Left ventricle myocardium superior (tissue), 1 donor: ENCODE measurements at regions of chr10 and their contacts with region 1.

Region 1: DNA sequence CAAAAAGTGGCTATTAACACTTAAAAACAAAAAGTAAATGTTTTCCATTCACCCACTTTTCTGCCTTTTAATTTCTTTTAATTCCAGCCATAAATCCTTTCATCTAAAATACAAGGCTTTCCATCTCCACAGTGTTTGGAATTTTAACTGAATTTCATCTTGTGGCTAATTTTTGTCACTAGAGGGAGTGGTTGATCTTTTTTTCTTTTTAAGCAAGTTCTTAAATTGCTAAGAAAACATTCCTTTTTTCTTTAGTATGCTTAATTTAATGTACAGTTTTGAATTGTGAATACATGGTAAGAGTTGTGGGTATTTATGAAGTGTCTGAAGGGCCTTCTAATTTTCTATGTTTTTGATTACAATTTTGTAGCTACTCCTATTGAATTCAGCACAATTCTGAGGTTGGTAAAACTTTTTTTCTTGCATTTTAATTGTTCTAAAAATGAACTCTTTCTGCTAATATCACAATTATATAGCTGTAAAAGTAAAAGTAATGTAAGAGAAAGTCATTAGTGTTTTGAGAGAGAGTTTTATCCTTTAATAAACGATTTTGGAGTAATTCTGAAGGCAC is 54.9 kb upstream of the ANK3 start:
- DNase-seq: no peak
- ATAC-seq: no peak

Region 2: DNA sequence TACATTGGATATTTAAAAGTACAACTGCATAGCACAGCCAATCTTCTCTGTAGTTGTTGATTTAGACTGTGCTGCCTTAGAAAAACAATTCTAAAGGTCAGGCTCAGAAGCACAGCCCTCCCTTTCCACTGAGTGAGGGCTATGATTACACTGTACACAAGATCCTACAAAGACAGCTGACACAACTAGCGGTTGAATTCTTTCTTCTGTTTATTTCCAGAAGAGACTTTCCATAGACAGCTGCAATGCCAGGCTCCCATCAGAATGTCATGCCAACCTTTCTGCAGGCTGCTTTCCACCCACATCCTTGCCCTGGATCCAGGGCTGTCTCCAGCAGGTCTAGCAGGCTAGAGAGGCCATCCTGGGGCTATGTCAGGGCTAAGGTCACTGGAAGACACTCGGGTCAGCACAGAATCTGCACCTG is 1121.5 kb before region 1 on chr10:
- intact Hi-C with region 1: no loop called
- DNase-seq: no peak
- ATAC-seq: peak; percentile 80

Region 3: GRCh38 chr10:60572511-60573194 is 128.1 kb after region 1 on chr10:
- intact Hi-C with region 1: no loop called
- DNase-seq: peak; percentile 53
- ATAC-seq: peak; percentile 83

Region 4: GRCh38 chr10:60646966-60647796 is 202.6 kb after region 1 on chr10:
- intact Hi-C with region 1: loop called (anchors 2 kb)
- DNase-seq: no peak
- ATAC-seq: no peak